HepG2 (cell line): ENCODE measurements at regions of chr2 and their contacts with region 1.

Region 1: DNA sequence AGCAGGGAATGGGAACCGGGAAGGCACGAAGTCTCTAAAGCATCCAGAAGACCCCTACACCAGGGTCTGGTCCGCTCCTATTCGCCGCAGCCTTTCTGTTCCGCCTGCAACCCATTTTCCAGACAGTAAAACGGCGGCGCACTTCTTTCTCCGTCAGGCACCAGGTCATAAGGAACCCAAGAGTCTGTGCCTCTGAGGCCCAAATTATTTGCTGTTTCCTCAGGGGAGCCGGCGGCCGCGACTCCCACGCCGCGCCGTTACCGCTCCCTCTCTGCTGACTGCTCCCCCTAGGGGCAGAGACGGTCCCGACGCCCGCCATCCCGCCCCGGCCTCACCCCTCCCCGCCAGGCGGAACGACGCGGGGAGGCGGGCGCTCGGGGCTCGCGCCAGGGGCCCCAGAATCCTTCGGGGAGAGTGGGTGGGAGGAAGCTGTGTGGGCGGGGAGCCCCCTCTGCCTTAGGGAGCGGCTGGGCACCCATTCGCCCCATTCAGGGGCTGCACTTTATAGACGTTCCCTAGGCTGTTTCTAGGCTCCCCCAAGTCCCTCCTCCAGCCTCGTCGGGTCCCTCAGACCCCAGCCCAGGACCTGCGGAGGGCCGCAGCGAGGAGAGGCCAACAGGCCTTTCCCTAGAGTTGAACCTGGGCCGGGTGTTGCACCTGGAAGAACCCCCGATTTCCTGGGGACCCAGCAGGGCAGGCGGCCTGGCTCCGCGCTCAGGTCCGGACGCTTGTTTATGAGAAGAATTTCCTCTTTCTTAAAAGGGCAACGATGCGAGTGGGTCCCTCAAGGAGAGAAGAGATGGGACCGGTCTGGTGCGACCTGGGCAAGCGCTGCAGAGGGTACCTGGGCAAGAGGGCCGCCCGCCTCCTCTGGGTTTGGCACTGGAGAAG is 3.6 kb upstream of the CTDSP1 start:
- DNase-seq: peak; percentile 94
- ATAC-seq: peak; percentile 25
- H3K4me3 ChIP-seq: peak overlapping the region; percentile 71 to 97 (median 85)
- H3K27ac ChIP-seq: peak overlapping the region; percentile 99
- H3K4me1 ChIP-seq: peaks cover 41% of the 10 kb centered on the region
- H3K27me3 ChIP-seq: no peaks in the 10 kb centered on the region; a peak in 1 of 5 replicates
- CTCF ChIP-seq: peak; percentile 94
- EP300 ChIP-seq: peak; percentile 19 to 78; a peak in 3 of 4 replicates
- POLR2A ChIP-seq: peak in 1 of 2 experiments; percentile 23; a peak in 1 of 4 replicates
- RAD21 ChIP-seq: peak; percentile 94

Region 2: DNA sequence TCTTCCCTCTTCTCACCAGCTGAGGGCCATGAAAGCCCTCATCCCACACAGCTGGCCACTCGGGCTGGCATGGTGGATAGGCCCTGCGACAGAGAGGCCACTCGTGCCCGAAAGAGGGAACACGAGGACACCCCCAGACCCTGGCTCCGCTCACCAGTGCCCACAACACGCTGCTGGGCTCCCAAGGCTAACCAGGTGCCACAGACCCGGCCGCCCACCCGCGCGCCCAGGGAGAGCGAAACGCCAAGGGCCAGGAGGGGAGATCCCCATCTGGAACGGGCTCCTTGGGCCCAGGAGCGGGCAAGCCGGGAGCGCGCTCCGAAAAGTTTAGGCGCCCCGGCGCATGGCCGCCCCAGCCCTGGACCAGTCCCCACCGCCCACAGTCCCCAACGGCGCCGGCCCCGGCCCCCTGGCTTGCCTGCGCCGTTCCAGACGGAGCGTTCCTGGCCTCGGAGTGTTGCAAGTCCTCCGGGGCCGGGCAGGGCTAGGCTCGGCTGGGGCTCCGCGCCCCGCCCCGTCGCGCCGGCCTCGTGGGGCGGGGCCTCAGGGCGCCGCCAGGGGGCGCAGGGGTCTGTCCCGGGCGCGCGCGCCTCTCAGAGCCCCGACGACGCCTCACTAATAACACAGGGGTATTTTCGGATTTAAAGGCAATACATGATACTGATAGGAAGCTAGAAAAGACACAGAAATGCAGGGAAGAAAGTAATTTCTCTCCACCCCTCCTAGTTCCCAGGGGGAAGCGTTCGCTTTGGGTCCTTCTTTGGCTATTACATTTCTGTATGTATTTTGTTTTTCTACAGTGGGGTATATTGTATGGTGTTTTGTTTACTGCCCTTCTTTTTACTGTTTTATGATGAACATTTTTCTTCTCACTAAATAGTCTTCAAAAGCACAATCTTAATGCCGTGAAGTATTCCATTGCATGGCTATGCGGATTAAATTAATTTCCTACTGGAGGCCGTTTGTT is 103.7 kb before region 1 on chr2 and contains the start of gene TMBIM1:
- CTCF ChIA-PET with region 1: interaction called, 8 read pairs
- POLR2A ChIA-PET with region 1: interaction called, 37 read pairs
- in situ Hi-C with region 1: loop called (anchors 5 kb)
- intact Hi-C with region 1: loop called (anchors 2 kb)
- DNase-seq: peak; percentile 72
- ATAC-seq: peak; percentile 84
- H3K4me3 ChIP-seq: peak within 1 kb of the TSS; percentile 83 to 99 (median 95)
- H3K27ac ChIP-seq: peak within 1 kb of the TSS; percentile 88
- H3K4me1 ChIP-seq: peaks cover 88% of the 10 kb centered on the region
- H3K27me3 ChIP-seq: no peaks in the 10 kb centered on the region; a peak in 1 of 5 replicates
- CTCF ChIP-seq: peak; percentile 72
- EP300 ChIP-seq: peak; percentile 38 to 73; a peak in 3 of 4 replicates
- POLR2A ChIP-seq: peak; percentile 77 to 88
- RAD21 ChIP-seq: peak; percentile 96
- total RNA-seq, gene TMBIM1: 69.7 and 139 TPM in 2 replicates

Region 3: DNA sequence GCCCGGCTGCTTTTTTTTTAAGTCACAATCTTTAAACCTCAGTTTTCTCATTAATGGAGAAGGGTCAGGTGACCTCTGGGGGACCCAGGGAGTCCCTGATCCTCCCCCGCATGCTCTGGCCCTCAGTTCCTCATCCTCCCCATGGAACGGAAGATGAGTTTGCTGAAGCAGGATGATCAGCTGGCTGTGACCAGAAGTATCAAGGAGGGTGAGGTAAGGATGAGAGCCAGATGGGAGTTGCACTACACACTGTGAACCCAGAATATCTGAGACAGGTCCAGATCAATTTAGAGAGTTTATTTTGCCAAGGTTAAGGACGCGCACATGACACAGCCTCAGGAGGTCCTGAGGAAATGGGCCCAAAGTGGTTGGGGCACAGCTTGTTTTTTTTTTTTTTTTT is 35.6 kb before region 1 on chr2:
- CTCF ChIA-PET with region 1: no interaction called
- POLR2A ChIA-PET with region 1: interaction called, 23 read pairs
- in situ Hi-C with region 1: no loop called
- intact Hi-C with region 1: loop called (anchors 1 kb)
- DNase-seq: no peak
- ATAC-seq: no peak
- H3K4me3 ChIP-seq: no peak overlapping the region
- H3K27ac ChIP-seq: no peak overlapping the region
- H3K4me1 ChIP-seq: peaks cover 65% of the 10 kb centered on the region
- H3K27me3 ChIP-seq: no peaks in the 10 kb centered on the region; a peak in 3 of 5 replicates
- CTCF ChIP-seq: no peak
- EP300 ChIP-seq: no peak
- POLR2A ChIP-seq: no peak
- RAD21 ChIP-seq: no peak

Region 4: GRCh38 chr2:218418717-218419458 is 22.8 kb after region 1 on chr2 and contains the start of gene VIL1:
- CTCF ChIA-PET with region 1: no interaction called
- POLR2A ChIA-PET with region 1: interaction called, 15 read pairs
- in situ Hi-C with region 1: no loop called
- intact Hi-C with region 1: no loop called
- DNase-seq: peak; percentile 94
- ATAC-seq: peak; percentile 89
- H3K4me3 ChIP-seq: peak within 1 kb of the TSS; percentile 73 to 89 (median 78)
- H3K27ac ChIP-seq: peak within 1 kb of the TSS; percentile 76
- H3K4me1 ChIP-seq: peaks cover 57% of the 10 kb centered on the region
- H3K27me3 ChIP-seq: no peaks in the 10 kb centered on the region; a peak in 1 of 5 replicates
- CTCF ChIP-seq: peak; percentile 15; the same call in 1 of the 2 replicates
- EP300 ChIP-seq: peak in 1 of 2 experiments; percentile 75; a peak in 2 of 4 replicates
- POLR2A ChIP-seq: peak; percentile 92 to 99
- RAD21 ChIP-seq: peak; percentile 38; the same call in 1 of the 2 replicates
- total RNA-seq, gene VIL1: 301 and 337 TPM in 2 replicates